ENCODE measurements at regions of chr20 and their contacts with region 1.

Region 1: DNA sequence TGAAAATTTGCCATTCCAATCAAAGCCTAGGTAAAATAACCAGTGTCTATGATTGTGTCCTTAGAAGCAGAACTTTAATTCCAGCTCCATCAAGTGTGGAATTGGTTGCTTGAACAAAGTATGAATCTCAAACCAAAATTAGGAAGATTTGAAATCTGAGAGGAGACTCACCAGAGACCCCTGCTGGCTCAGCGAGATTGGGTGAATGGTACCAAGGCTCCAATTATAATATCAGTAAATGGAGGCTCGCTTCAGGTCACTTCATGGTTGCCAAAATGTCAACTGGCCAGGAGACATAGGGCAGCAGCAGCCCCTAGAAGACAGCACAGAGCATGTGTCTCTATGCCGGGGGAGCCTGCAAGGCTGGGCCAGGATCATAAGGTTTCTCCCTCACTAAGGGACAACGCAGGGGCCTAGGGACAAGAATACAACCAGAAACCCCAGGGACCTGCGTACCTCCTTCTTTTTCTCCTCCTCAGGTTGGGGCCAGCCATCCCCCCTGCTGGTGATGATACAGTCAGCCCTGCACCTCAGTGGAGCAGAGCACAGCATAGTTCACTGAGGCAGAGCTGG is 14.0 kb downstream of the RBL1 start:
- DNase-seq: peak; percentile 37 to 77 (median 54)
- ATAC-seq: peak; percentile 86
- H3K4me3 ChIP-seq: no peak overlapping the region
- H3K4me3 Mint-ChIP-seq: no peak overlapping the region
- H3K27ac ChIP-seq: peak overlapping the region in 1 of 2 donors; percentile 16
- H3K27ac Mint-ChIP-seq: peak overlapping the region; percentile 48
- H3K4me1 ChIP-seq: peaks cover 10% of the 10 kb centered on the region
- H3K4me1 Mint-ChIP-seq: peaks cover 25% of the 10 kb centered on the region
- H3K27me3 ChIP-seq: no peaks in the 10 kb centered on the region
- H3K27me3 Mint-ChIP-seq: no peaks in the 10 kb centered on the region
- CTCF ChIP-seq: peak; percentile 88

Region 2: DNA sequence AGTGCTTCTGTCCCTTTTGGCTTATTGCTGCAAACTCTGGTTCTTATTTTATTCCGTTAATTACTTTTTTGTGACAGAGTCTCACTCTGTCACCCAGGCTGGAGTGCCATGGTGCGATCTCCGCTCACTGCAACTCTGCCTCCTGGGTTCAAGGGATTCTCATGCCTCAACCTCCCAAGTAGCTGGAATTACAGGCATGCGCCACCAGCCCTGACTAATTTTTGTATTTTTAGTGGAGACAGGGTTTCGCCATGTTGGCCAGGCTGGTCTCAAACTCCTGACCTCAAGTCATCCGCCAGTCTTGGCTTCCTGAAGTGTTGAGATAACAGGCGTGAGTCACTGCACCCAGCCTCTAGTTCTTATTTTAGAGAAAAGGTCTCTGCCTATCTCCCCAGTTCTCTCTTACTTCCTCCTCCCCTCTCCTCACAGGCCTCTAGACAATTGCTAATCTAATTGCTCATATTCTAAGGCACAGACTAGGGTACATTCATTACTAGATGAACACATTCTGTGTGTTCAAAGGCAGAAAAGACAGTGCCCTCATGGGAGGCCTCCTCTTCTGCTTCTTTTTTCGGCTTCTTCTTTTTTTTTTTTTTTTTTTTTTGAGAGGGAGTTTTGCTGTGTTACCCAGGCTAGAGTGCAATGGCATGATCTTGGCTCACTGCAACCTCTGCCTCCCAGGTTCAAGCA is 1961.6 kb before region 1 on chr20:
- CTCF ChIA-PET with region 1: no interaction called
- POLR2A ChIA-PET with region 1: no interaction called
- intact Hi-C with region 1: no loop called
- DNase-seq: peak in 1 of 14 experiments; percentile 24
- ATAC-seq: no peak
- H3K4me3 ChIP-seq: no peak overlapping the region
- H3K4me3 Mint-ChIP-seq: no peak overlapping the region
- H3K27ac ChIP-seq: no peak overlapping the region
- H3K27ac Mint-ChIP-seq: no peak overlapping the region
- H3K4me1 ChIP-seq: no peaks in the 10 kb centered on the region
- H3K4me1 Mint-ChIP-seq: no peaks in the 10 kb centered on the region
- H3K27me3 ChIP-seq: no peaks in the 10 kb centered on the region
- H3K27me3 Mint-ChIP-seq: no peaks in the 10 kb centered on the region
- CTCF ChIP-seq: no peak

Region 3: DNA sequence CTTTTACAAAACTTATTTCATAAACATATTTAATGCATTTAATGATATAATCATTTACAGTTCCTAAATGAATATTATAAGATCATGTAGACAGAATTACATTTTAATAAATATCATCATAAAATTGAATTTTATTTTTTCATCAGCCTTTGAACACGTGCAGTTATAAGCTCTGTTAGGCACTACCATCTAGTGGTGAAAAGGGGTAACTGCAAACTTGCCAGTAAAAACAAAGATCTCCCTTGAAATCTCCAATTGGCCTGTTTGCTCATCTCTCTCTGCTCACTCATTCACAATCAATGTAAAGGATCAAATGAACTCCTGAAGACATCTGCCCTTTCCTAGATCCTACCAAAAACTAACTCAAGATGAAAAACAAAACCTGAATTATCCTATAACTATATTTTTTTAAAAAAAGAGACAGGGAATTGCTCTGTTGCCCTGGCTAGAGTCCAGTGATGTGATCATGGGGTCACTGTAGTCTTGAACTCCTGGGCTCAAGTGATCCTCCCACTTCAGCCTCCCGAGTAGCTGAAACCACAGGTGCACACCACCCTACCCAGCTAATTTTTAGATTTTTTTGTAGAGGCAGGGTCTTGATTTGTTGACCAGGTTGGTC is 162.0 kb before region 1 on chr20:
- CTCF ChIA-PET with region 1: no interaction called
- POLR2A ChIA-PET with region 1: interaction called, 4 read pairs
- intact Hi-C with region 1: loop called in 1 of 2 experiments (anchors 5 kb)
- DNase-seq: peak in 5 of 14 experiments; percentile 5 to 78 (median 71)
- ATAC-seq: peak; percentile 91
- H3K4me3 ChIP-seq: no peak overlapping the region
- H3K4me3 Mint-ChIP-seq: peak overlapping the region; percentile 25
- H3K27ac ChIP-seq: no peak overlapping the region
- H3K27ac Mint-ChIP-seq: peak overlapping the region; percentile 72
- H3K4me1 ChIP-seq: peaks cover 11% of the 10 kb centered on the region
- H3K4me1 Mint-ChIP-seq: peaks cover 21% of the 10 kb centered on the region
- H3K27me3 ChIP-seq: no peaks in the 10 kb centered on the region
- H3K27me3 Mint-ChIP-seq: no peaks in the 10 kb centered on the region
- CTCF ChIP-seq: peak; percentile 90

Region 4: DNA sequence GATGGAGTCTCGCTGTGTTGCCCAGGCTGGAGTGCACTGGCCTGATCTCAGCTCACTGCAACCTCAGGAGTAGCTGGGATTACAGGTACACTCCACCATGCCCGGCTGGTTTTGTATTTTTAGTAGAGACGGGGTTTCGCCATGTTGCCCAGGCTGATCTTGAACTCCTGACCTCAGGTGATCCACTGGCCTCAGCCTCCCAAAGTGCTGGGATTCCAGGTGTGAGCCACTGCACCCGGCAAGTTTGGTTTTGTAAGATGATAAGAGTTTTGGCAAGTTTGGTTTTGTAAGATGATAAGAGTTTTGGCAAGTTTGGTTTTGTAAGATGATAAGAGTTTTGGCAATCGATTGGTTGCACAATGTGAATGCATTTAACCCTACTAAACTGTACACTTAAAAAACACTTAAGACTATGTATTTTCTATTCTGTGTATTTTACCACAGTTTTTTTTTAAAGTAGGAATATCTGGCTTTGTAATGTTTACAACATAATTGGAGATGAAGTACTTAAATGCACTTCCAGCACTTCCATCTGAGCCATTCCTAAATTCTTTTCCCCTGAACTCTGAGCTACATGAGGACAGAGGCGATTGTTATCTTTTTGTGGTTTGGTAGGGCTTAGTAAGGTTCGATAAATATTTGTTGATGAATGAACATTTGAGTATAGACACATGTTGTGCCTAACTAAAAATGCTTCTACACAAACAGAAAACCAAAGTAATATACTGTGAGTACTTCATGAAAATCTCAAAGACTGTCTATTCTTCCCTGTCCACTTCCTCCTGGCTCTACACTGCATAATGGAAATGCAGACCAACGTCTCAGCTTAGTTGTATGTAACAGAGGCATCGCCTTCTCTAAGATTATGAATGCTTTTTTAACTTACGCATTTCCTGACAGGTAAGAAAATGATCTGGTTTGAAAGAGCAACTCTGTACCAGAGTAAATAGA is 149.1 kb before region 1 on chr20:
- CTCF ChIA-PET with region 1: no interaction called
- POLR2A ChIA-PET with region 1: interaction called, 3 read pairs
- intact Hi-C with region 1: loop called in 1 of 2 experiments (anchors 5 kb)
- DNase-seq: peak in 1 of 14 experiments; percentile 16
- ATAC-seq: no peak
- H3K4me3 ChIP-seq: no peak overlapping the region
- H3K4me3 Mint-ChIP-seq: peak overlapping the region; percentile 37
- H3K27ac ChIP-seq: peak overlapping the region in 1 of 2 donors; percentile 21
- H3K27ac Mint-ChIP-seq: peak overlapping the region; percentile 81
- H3K4me1 ChIP-seq: peaks cover 68% of the 10 kb centered on the region
- H3K4me1 Mint-ChIP-seq: peaks cover 64% of the 10 kb centered on the region
- H3K27me3 ChIP-seq: no peaks in the 10 kb centered on the region
- H3K27me3 Mint-ChIP-seq: no peaks in the 10 kb centered on the region
- CTCF ChIP-seq: no peak

Region 5: GRCh38 chr20:37108676-37109075 is 26.9 kb after region 1 on chr20:
- CTCF ChIA-PET with region 1: no interaction called
- POLR2A ChIA-PET with region 1: no interaction called
- intact Hi-C with region 1: no loop called
- DNase-seq: no peak
- ATAC-seq: no peak
- H3K4me3 ChIP-seq: no peak overlapping the region
- H3K4me3 Mint-ChIP-seq: no peak overlapping the region
- H3K27ac ChIP-seq: no peak overlapping the region
- H3K27ac Mint-ChIP-seq: no peak overlapping the region
- H3K4me1 ChIP-seq: no peaks in the 10 kb centered on the region
- H3K4me1 Mint-ChIP-seq: no peaks in the 10 kb centered on the region
- H3K27me3 ChIP-seq: no peaks in the 10 kb centered on the region
- H3K27me3 Mint-ChIP-seq: no peaks in the 10 kb centered on the region
- CTCF ChIP-seq: no peak

Measured in CD4-positive, alpha-beta T cell (primary cell).